Gastrocnemius medialis (tissue), 4 donors: ENCODE measurements at regions of chr4 and their contacts with region 1.

Region 1: DNA sequence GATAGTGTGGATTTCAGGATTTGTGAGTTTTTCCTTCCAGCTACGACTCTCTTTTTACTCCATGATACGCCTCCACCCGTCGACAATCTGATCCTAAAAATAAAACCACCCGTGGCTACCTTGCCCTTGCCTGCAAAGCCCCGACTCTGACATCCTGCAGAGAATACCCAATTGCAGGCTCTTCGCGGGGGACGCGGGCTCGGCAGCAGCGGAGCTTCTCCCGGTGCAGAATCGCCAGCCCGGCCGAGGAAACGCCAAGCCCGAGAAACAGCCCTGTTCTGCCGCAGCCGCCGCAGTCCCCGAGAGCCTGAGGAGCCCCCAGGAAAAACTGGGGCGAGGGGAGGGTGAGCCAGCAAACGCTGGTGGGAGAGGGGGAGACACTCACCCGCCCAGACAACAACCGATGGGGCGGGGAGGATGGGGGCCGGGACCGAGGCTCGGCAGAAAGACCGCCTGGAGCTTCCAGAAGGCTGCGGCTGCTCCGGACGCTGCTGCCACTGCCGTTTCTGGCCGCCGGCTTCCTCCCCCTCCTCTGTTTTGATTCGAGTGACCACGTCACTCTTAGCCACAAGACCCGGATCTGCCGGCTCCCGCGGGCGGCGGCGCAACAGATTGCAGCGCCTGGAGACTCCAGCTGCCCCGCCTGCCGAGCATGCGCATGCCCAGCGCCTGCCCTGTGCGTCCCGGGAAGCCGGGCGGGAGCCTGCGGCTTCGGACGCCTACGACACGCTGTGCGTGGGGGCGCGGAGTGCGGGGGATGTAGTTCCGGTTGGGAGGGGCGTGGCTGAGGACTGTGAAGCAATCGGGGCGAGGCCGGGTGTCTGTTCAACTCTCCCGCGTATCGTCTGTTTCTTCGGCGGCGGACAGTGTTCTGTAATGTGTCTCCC is at the start of gene SMIM14:
- DNase-seq: peak; percentile 97 to 98
- ATAC-seq: peak; percentile 88 to 90
- H3K4me3 ChIP-seq: peak within 1 kb of the TSS; percentile 95 to 100 (median 98)
- H3K27ac ChIP-seq: peak within 1 kb of the TSS; percentile 99 to 100 (median 100)
- H3K4me1 ChIP-seq: peaks cover 22 to 28% of the 10 kb centered on the region in 2 donors
- H3K27me3 ChIP-seq: no peaks in the 10 kb centered on the region
- CTCF ChIP-seq: peak in 3 of 5 experiments; percentile 31 to 38 (median 35)
- POLR2A ChIP-seq: peak; percentile 98 to 99
- total RNA-seq, gene SMIM14: 6.9 to 15.3 (median 9.5) TPM

Region 2: DNA sequence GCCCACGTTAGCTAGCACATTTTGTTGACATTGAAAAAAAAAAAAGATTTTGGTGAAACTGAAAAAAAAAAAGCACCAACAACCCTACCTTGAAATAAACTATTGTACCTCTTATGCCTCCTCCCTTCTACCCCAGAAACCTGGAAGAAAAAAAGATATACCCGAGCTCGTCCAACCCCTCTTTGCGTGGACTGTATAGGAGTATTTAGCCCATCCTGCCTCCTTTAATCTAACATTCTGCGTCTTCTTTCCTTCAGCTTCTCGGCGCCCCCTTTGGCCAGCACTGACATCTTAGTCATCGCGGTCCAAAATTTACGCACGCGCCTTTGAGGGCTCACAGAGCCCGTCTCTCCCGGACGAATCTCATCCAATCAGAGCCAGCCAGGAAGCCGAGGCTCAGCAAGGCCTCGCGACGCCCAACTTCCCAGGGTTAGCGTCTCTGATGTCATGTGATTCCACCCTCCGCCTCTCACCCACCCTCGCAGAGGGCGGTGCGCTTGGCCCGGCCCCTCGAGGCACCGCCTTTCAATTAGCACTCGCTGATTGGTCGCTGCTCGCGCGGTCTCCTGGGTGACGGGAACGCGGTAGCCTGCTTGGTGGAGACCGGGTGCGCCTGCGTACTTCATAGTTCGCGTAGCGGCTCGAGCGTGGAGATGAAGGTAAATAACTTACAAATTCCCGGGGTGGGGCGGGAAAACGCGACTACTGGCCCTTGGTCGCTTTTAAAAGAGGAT is 456.5 kb before region 1 on chr4 and contains the start of gene WDR19:
- in situ Hi-C with region 1: no loop called
- intact Hi-C with region 1: loop called (anchors 5 kb)
- DNase-seq: peak; percentile 99
- ATAC-seq: peak; percentile 99 to 100
- H3K4me3 ChIP-seq: peak within 1 kb of the TSS; percentile 70 to 94 (median 74)
- H3K27ac ChIP-seq: peak within 1 kb of the TSS; percentile 81 to 87 (median 83)
- H3K4me1 ChIP-seq: peaks cover 9 to 16% of the 10 kb centered on the region in 2 donors
- H3K27me3 ChIP-seq: no peaks in the 10 kb centered on the region
- CTCF ChIP-seq: peak in 3 of 5 experiments; percentile 12 to 58 (median 45)
- POLR2A ChIP-seq: peak; percentile 45 to 59
- total RNA-seq, gene WDR19: 6.1 to 16.2 (median 9.6) TPM

Region 3: GRCh38 chr4:39458505-39459300 is 179.9 kb before region 1 on chr4 and contains the starts of genes LIAS and RPL9:
- in situ Hi-C with region 1: loop called in 3 of 4 experiments (anchors 10 to 25 kb)
- intact Hi-C with region 1: loop called (anchors 2 kb)
- DNase-seq: peak; percentile 94 to 98
- ATAC-seq: peak; percentile 96 to 98
- H3K4me3 ChIP-seq: peak within 1 kb of the TSS; percentile 86 to 97 (median 90)
- H3K27ac ChIP-seq: peak within 1 kb of the TSS; percentile 90 to 97 (median 95)
- H3K4me1 ChIP-seq: peaks cover 19 to 21% of the 10 kb centered on the region in 2 donors
- H3K27me3 ChIP-seq: no peaks in the 10 kb centered on the region
- CTCF ChIP-seq: peak in 1 of 5 experiments; percentile 18
- POLR2A ChIP-seq: peak; percentile 95 to 96
- total RNA-seq, gene LIAS: 10.3 to 20.2 (median 12.1) TPM
- total RNA-seq, gene RPL9: 2,556 to 3,080 (median 2,834) TPM

Region 4: GRCh38 chr4:39521253-39521919 is 117.2 kb before region 1 on chr4:
- in situ Hi-C with region 1: loop called in 2 of 4 experiments (anchors 5 kb)
- intact Hi-C with region 1: no loop called
- DNase-seq: no peak
- ATAC-seq: no peak
- H3K4me3 ChIP-seq: no peak overlapping the region
- H3K27ac ChIP-seq: no peak overlapping the region
- H3K4me1 ChIP-seq: peaks cover 5 to 6% of the 10 kb centered on the region in 2 donors
- H3K27me3 ChIP-seq: no peaks in the 10 kb centered on the region
- CTCF ChIP-seq: no peak
- POLR2A ChIP-seq: no peak

Region 5: DNA sequence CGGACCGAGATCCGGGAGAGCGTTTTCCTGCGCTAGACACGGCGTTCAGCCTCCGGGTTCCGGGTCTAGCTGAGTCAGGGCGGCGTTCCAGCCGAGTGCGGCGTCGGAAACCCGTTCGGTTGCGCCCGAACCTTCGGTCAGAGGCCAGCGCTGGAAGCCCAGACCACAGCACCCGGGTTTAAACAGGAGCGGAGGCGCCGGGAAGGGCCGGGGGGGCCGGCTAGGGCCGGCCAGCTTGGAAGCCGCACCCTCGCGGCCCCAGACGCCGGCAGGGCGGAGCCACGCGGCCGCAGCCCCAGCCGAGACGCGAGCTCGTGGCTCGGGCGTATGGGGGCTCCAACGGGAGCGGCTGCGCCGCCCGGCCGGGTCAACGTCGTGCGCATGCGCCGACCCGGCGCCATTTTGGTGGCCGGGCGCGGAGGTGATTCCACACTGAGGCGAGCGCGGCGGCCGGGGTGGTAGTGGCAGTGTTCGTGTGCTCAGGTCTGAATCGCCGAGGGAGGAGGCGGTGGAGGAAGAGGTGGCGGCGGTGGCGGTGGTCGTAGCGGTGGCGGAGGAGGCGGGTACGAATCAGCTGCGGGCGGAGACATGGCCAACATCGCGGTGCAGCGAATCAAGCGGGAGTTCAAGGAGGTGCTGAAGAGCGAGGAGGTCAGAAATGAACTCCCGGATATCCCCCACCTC is 59.3 kb after region 1 on chr4 and contains the start of gene UBE2K:
- in situ Hi-C with region 1: no loop called
- intact Hi-C with region 1: loop called (anchors 1 kb)
- DNase-seq: peak; percentile 70 to 83
- ATAC-seq: peak; percentile 81 to 84
- H3K4me3 ChIP-seq: peak within 1 kb of the TSS; percentile 59 to 93 (median 84)
- H3K27ac ChIP-seq: peak within 1 kb of the TSS; percentile 87 to 97 (median 96)
- H3K4me1 ChIP-seq: peaks cover 32 to 35% of the 10 kb centered on the region in 2 donors
- H3K27me3 ChIP-seq: no peaks in the 10 kb centered on the region
- CTCF ChIP-seq: no peak
- POLR2A ChIP-seq: peak; percentile 90 to 93
- total RNA-seq, gene UBE2K: 28.7 to 38.8 (median 32.1) TPM

Region 6: GRCh38 chr4:40056716-40057585 is 418.4 kb after region 1 on chr4 and contains the start of gene N4BP2:
- in situ Hi-C with region 1: no loop called
- intact Hi-C with region 1: loop called (anchors 2 kb)
- DNase-seq: peak; percentile 40 to 61
- ATAC-seq: peak; percentile 69
- H3K4me3 ChIP-seq: peak within 1 kb of the TSS; percentile 77 to 99 (median 85)
- H3K27ac ChIP-seq: peak within 1 kb of the TSS; percentile 94 to 99 (median 96)
- H3K4me1 ChIP-seq: peaks cover 3 to 13% of the 10 kb centered on the region in 2 donors
- H3K27me3 ChIP-seq: no peaks in the 10 kb centered on the region
- CTCF ChIP-seq: peak in 4 of 5 experiments; percentile 41 to 87 (median 68)
- POLR2A ChIP-seq: peak; percentile 78 to 87
- total RNA-seq, gene N4BP2: 1.3 to 7.0 (median 3.3) TPM